Activated CD4-positive, alpha-beta memory T cell treated with anti-CD3 and anti-CD28 coated beads, Interleukin-2, amount 10 ng/mL, durations not matched to agents 7 days and 5 days (primary cell): ENCODE measurements at regions of chr17 and their contacts with region 1.

Region 1: GRCh38 chr17:29931231-29931932 is 1.4 kb upstream of the SSH2 start:
- DNase-seq: peak; percentile 73
- H3K4me3 Mint-ChIP-seq: no peak overlapping the region
- H3K27ac Mint-ChIP-seq: no peak overlapping the region
- H3K4me1 Mint-ChIP-seq: peaks cover 23% of the 10 kb centered on the region
- H3K27me3 Mint-ChIP-seq: no peaks in the 10 kb centered on the region

Region 2: DNA sequence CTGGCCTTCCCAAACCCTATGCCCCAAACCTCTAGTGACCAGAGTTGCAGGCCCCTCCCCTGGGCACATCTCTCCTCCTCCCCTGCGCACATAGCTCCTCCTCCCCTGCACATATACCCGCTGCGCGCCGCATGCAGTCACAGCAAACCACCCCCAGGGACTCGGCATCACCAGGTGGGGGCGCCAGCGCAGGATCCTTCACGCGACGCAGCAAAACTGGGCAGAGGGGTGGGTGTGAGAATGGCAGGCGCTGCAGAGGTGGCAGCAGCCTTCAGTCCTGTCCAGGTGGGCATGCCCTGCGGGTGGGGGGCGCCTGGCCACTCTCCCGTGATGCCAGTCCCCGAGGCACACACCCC is 314.3 kb before region 1 on chr17:
- CTCF ChIA-PET with region 1: interaction called, 35 read pairs
- POLR2A ChIA-PET with region 1: interaction called, 34 read pairs
- DNase-seq: peak; percentile 96
- H3K4me3 Mint-ChIP-seq: peak overlapping the region; percentile 75
- H3K27ac Mint-ChIP-seq: peak overlapping the region; percentile 96
- H3K4me1 Mint-ChIP-seq: peaks cover 55% of the 10 kb centered on the region
- H3K27me3 Mint-ChIP-seq: peaks cover 23% of the 10 kb centered on the region

Region 3: GRCh38 chr17:29705386-29705785 is 226.0 kb before region 1 on chr17:
- CTCF ChIA-PET with region 1: interaction called, 5 read pairs
- POLR2A ChIA-PET with region 1: interaction called, 16 read pairs
- DNase-seq: no peak
- H3K4me3 Mint-ChIP-seq: peak overlapping the region; percentile 35
- H3K27ac Mint-ChIP-seq: peak overlapping the region; percentile 100
- H3K4me1 Mint-ChIP-seq: peaks cover 45% of the 10 kb centered on the region
- H3K27me3 Mint-ChIP-seq: no peaks in the 10 kb centered on the region

Region 4: DNA sequence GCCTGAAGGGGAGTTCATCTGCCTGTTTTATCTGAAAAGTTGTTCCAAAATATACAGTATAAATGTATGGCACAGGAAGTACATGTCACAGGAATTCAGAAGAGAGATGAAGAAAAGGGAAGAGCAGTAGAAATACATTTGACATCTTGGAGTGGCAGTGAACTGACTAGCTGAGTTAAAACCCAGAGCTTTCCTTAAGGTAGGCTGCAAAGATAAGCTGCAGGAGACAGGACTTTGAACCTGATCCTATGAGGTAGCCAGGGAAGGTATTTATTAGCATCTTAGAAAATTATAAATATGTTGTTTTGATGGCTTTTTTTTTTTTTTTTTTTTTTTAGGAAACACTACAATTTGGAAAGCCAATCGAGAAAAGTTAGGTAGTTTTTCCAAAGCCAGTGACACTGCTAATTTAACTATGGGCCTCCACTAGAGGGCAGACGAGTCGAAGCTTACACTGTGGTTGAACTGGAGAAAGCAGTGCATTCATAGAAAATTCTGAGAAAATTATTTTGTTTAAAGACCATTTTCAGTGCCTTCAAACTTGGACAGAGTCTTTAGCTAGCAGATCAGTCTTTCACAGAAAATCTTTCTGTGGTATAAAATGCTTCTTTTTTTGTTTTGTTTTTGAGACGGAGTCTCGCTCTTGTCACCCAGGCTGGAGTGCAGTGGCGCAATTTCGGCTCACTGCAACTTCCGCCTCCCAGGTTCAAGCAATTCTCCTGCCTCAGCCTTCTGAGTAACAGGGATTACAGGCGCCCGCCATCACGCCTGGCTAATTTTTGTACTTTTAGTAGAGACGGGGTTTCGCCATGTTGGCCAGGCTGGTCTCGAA is 123.6 kb before region 1 on chr17:
- CTCF ChIA-PET with region 1: interaction called, 283 read pairs
- POLR2A ChIA-PET with region 1: interaction called, 21 read pairs
- DNase-seq: peak; percentile 72
- H3K4me3 Mint-ChIP-seq: no peak overlapping the region
- H3K27ac Mint-ChIP-seq: no peak overlapping the region
- H3K4me1 Mint-ChIP-seq: peaks cover 19% of the 10 kb centered on the region
- H3K27me3 Mint-ChIP-seq: no peaks in the 10 kb centered on the region

Region 5: GRCh38 chr17:29828676-29829284 is 102.6 kb before region 1 on chr17:
- CTCF ChIA-PET with region 1: interaction called, 19 read pairs
- POLR2A ChIA-PET with region 1: no interaction called
- DNase-seq: no peak
- H3K4me3 Mint-ChIP-seq: no peak overlapping the region
- H3K27ac Mint-ChIP-seq: no peak overlapping the region
- H3K4me1 Mint-ChIP-seq: peaks cover 2% of the 10 kb centered on the region
- H3K27me3 Mint-ChIP-seq: no peaks in the 10 kb centered on the region

Region 6: DNA sequence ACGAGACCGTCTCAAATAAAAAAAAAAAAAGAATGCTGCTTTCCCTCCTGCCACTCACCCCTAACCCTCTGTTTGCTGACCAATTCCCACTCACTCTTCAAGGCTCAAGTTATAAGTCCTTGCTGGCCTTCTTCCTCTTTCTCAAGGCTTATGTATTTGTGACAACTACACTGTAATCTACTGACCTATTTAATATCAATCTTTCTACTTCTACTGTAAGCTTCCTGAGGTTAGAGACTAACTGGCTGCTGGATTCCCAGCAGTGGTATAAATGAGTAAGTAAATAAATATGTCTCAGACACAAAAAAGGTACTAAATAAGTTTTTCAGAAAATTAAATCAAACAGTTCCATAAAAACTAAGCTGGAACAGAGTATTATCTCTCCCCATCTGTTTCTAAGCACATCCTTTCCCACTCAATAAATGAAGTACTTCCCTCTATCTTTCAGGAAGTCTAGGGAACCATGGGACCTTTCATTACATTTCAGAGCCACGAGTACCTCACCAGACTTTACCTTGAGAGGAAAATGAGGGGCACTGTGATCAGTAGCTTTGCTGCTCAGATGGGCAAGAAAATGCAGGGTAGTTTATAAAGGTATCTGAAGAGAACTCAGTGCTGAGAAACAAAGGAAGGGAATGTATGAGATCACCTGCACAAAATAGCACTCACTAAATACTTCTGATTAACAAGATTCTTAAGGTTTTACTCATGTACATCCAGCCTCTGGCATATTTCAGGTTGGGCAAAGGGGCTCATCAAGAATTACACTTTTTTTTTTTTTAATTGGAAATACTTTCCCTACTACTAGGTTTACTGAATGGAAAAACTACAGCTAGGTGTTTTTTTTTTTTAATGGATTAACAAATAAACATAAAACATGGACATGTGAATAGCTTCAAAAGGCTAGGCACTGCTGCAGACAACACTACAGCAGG is 12.2 kb before region 1 on chr17:
- CTCF ChIA-PET with region 1: interaction called, 30 read pairs
- POLR2A ChIA-PET with region 1: interaction called, 9 read pairs
- DNase-seq: no peak
- H3K4me3 Mint-ChIP-seq: no peak overlapping the region
- H3K27ac Mint-ChIP-seq: no peak overlapping the region
- H3K4me1 Mint-ChIP-seq: peaks cover 23% of the 10 kb centered on the region
- H3K27me3 Mint-ChIP-seq: no peaks in the 10 kb centered on the region

Region 7: DNA sequence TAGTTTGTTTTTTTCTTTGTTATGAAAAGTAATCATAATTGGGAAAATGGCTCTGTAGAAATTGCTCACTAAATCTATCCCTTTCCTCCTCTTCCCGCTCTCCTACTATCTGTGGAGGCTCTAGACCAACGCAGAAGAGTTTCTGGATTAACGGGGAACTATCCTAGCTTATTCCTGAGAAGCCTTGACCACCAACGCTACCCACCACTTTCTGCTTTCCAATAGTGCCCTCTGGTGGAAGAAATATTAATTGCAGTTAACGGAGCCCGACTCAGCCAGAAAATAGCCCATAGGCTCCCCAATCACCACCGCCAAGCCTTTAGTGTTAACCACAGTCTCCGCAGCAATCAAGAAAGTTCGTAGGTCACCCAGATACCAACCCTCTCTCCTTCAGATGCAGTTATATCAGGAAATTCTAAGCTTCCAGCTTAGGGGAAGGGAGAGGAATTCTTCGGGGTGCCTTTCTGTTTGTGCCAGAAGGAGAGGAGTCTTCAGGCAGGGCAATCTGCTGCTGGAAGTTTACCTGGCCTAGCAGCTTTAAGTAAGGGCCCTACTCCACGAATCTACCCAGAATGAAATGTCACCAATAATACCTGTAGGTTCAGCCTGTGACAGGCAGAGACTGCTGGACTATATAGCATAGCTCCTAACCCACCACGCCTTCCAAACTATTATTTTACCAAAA is 162.2 kb after region 1 on chr17:
- CTCF ChIA-PET with region 1: interaction called, 17 read pairs
- POLR2A ChIA-PET with region 1: no interaction called
- DNase-seq: peak; percentile 45
- H3K4me3 Mint-ChIP-seq: no peak overlapping the region
- H3K27ac Mint-ChIP-seq: no peak overlapping the region
- H3K4me1 Mint-ChIP-seq: peaks cover 7% of the 10 kb centered on the region
- H3K27me3 Mint-ChIP-seq: peaks cover 52% of the 10 kb centered on the region